HCT116 (cell line): ENCODE measurements at regions of chr6 and their contacts with region 1.

Region 1: GRCh38 chr6:49531774-49532569 is 18.5 kb upstream of the C6orf141 start:
- DNase-seq: peak; percentile 82
- ATAC-seq: peak; percentile 97
- H3K4me3 ChIP-seq: peak overlapping the region; percentile 22 to 40
- H3K27ac ChIP-seq: no peak overlapping the region
- H3K4me1 ChIP-seq: peaks cover 0 to 6% of the 10 kb centered on the region in 2 experiments; a peak in 2 of 4 replicates
- H3K27me3 ChIP-seq: no peaks in the 10 kb centered on the region
- CTCF ChIP-seq: peak; percentile 68 to 100 (median 98)
- POLR2A ChIP-seq: no peak
- RAD21 ChIP-seq: peak; percentile 89

Region 2: DNA sequence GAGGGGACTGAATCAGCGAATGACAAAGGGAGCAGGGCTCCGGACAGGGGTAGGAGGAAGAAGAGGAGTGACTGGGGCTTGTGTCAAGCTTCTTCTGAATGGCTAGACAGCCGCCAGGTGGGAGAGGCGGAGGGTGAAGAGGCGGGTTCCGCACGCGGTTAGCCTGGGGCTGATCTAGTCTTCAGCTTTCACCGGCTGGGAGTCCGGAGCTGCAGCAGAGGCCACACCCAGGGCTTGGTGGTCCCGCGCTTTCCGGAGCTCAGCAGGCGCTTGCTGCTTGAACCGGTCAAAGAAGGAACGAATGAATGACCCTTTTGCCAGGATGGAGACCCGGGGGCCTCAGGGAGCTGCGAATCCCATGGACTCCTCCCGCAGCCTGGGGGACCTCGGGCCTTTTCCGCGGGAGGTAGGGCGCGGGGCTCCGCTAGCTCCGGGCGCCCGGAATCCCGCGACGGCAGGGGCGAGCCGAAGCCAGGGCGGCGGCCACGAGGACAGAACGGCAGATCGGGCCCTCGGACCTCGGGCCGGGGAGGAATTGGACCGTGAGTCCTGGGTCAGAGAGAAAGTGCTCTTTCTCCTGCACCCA is 18.6 kb after region 1 on chr6 and contains the start of gene C6orf141:
- CTCF ChIA-PET with region 1: interaction called, 21 read pairs
- POLR2A ChIA-PET with region 1: interaction called, 6 read pairs
- RAD21 ChIA-PET with region 1: no interaction called
- intact Hi-C with region 1: no loop called
- DNase-seq: peak; percentile 70
- ATAC-seq: peak; percentile 88
- H3K4me3 ChIP-seq: peak within 1 kb of the TSS; percentile 75
- H3K27ac ChIP-seq: peak within 1 kb of the TSS; percentile 81
- H3K4me1 ChIP-seq: peaks cover 43 to 64% of the 10 kb centered on the region in 2 experiments
- H3K27me3 ChIP-seq: no peaks in the 10 kb centered on the region
- CTCF ChIP-seq: no peak
- POLR2A ChIP-seq: no peak
- RAD21 ChIP-seq: no peak
- total RNA-seq, gene C6orf141: 31.6 TPM

Region 3: DNA sequence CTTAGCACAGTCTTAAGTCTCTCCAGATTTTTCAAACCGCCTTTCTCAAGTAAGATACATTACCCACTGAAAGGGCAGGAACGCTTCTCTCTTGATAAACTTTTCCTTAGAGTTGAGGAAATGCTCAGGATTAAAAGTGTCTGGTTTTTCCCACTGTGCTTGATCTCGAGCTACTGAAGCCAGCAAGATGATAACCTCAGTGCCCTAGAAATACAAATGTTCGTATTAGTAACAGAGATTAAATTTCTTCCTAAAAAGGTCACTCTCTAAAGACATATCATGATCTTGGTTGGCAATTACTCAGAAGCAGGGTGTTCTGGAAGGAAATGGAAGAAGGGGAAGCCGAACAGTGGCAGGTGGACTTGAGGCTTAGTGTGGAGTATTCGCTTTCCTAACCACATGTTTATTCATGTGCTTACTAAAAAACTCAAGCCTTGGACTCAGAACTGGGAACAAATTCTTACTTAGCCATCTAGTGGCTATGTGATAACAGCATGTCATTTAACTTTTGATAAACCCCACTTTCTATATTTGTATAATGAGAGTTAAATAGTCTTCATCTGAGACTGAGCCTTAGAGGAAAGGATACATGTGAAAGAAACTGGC is 38.6 kb after region 1 on chr6:
- CTCF ChIA-PET with region 1: interaction called, 15 read pairs
- POLR2A ChIA-PET with region 1: no interaction called
- RAD21 ChIA-PET with region 1: no interaction called
- intact Hi-C with region 1: no loop called
- DNase-seq: no peak
- ATAC-seq: peak; percentile 73
- H3K4me3 ChIP-seq: no peak overlapping the region
- H3K27ac ChIP-seq: no peak overlapping the region
- H3K4me1 ChIP-seq: peaks cover 12 to 20% of the 10 kb centered on the region in 2 experiments
- H3K27me3 ChIP-seq: no peaks in the 10 kb centered on the region
- CTCF ChIP-seq: peak; percentile 25 to 58 (median 42); a peak in 4 of 6 replicates
- POLR2A ChIP-seq: no peak
- RAD21 ChIP-seq: peak; percentile 40

Region 4: DNA sequence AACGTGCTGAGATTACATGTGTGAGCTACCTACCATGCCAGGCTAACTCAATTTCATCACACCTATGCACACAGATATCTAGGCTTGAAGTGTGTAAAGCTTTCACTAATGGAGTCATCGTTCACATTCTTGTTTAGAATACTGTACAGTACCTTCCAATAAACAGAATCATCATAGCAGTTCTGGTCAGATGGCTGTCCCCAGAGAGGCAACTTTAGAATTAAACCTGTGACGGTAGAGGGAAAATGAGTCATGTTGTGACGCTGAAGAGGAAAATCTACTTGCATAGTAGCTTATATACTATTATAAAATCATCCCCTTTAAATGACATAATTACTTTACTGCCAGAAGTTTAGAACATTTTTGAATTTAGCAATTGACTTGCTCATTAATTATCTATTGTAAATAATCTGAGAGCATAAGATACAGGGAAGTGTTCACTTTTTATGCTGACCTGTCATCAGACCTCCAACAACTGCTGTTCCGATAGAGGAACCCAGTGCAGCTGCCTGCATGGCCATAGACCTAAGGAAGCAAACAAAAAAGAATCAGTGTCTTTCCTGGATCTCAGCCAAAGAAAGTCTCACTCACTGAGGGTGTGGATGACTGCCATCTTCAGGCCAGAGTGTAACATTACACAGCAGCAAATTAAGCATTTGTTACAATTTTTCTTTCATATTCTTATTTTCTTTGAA is 74.9 kb after region 1 on chr6:
- CTCF ChIA-PET with region 1: interaction called, 59 read pairs
- POLR2A ChIA-PET with region 1: interaction called, 4 read pairs
- RAD21 ChIA-PET with region 1: no interaction called
- intact Hi-C with region 1: loop called (anchors 1 kb)
- DNase-seq: peak; percentile 93
- ATAC-seq: peak; percentile 95
- H3K4me3 ChIP-seq: peak overlapping the region in 1 of 2 experiments; percentile 43; a peak in 2 of 4 replicates
- H3K27ac ChIP-seq: no peak overlapping the region
- H3K4me1 ChIP-seq: peaks cover 0 to 12% of the 10 kb centered on the region in 2 experiments; a peak in 3 of 4 replicates
- H3K27me3 ChIP-seq: no peaks in the 10 kb centered on the region
- CTCF ChIP-seq: peak; percentile 79 to 97 (median 86)
- POLR2A ChIP-seq: no peak
- RAD21 ChIP-seq: peak; percentile 92

Region 5: DNA sequence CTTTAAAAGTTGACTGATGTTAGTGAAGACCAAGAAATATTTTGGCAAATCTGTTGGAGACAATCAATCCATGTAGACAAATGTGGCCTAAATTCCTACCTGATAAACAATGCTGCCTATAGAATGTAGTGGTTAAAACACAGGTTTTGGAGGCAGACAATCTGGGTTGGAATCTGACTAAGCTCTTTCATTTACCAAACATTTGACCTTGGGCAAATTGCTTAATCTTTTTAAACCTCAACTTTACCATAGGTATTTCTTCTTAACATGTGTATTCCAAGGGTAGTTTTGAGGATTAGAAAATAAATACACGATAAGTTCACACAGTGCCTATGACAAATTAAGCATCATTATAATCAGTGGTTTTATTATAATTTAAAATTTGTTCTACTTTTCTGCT is 93.2 kb after region 1 on chr6:
- CTCF ChIA-PET with region 1: interaction called, 9 read pairs
- POLR2A ChIA-PET with region 1: no interaction called
- RAD21 ChIA-PET with region 1: interaction called, 3 to 8 read pairs
- intact Hi-C with region 1: loop called (anchors 5 kb)
- DNase-seq: no peak
- ATAC-seq: no peak
- H3K4me3 ChIP-seq: no peak overlapping the region
- H3K27ac ChIP-seq: no peak overlapping the region
- H3K4me1 ChIP-seq: peaks cover 6 to 8% of the 10 kb centered on the region in 2 experiments; a peak in 2 of 4 replicates
- H3K27me3 ChIP-seq: no peaks in the 10 kb centered on the region
- CTCF ChIP-seq: no peak
- POLR2A ChIP-seq: no peak
- RAD21 ChIP-seq: no peak

Region 6: DNA sequence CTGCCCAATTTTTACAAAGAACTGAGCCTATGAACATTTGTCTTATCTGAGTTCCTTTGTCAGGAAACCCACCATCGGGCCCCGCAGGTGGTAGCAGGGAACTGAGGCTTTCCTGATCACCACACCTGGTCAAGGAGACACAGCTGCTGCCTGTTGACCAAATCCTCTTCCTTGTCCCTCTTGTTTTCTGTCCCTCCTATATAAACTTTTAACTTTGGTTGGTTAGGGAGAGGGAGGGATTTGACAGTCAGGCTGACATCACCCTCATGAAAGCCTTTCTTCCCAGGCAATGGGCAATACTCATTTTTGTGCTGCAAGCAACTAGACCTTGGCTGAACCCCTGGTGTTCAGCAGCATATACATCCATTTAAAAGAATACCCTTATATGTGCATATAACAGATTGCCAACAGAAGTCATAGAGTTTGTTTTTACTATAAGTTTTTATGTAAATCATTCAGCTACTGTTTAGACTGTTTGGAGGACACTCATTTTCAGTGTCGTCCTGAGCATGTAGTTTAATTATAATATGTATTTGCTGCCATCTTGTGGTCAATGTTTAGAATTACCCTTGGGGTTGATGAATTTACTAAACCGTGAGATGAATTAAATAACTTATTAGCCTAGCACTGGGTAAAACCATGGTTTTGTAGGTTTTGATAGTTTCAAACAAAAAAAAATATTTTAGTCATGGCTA is 317.4 kb after region 1 on chr6:
- CTCF ChIA-PET with region 1: interaction called, 15 read pairs
- POLR2A ChIA-PET with region 1: no interaction called
- RAD21 ChIA-PET with region 1: interaction called, 3 to 4 read pairs
- intact Hi-C with region 1: loop called (anchors 1 kb)
- DNase-seq: peak; percentile 56
- ATAC-seq: peak; percentile 88
- H3K4me3 ChIP-seq: no peak overlapping the region
- H3K27ac ChIP-seq: no peak overlapping the region
- H3K4me1 ChIP-seq: no peaks in the 10 kb centered on the region
- H3K27me3 ChIP-seq: no peaks in the 10 kb centered on the region
- CTCF ChIP-seq: peak; percentile 33 to 73 (median 65); a peak in 4 of 6 replicates
- POLR2A ChIP-seq: no peak
- RAD21 ChIP-seq: peak; percentile 82

Region 7: DNA sequence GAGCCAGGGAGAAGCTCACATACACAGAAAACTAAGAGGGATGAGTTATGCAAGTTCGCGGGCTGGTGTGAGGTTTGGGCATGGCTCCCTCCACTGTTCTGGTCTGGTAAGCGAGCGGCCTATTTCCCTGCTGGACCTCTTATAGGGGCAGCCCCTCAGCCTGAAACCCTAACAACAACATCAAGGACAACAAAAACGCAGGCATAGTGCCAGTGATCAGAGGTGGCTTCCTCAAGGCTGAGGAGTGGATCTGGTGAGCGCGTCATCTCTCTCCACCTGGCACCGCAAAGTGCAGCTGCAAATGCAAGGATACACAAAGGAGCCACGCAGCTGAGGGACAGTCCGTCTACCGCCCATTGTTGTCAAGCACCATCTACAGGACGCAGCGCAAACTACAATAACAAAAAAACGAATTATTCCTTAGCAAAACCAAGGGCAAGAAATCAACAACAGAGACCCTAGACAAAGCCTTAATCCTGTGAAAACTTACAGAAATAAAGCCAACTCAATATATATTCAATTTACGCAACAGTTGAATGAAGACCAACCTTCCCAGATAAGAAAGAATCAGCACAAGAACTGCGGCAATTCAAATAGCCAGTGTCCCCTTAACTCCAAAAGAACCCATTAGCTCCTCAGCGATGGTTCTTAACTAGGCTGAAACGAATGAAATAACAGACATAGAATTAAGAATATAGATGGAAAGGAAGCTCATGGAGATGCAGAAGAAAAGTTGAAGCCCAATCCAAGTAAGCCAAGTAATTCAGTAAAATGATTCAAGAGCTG is 499.0 kb after region 1 on chr6:
- CTCF ChIA-PET with region 1: interaction called, 4 read pairs
- POLR2A ChIA-PET with region 1: no interaction called
- RAD21 ChIA-PET with region 1: no interaction called
- intact Hi-C with region 1: loop called (anchors 1 kb)
- DNase-seq: peak; percentile 46
- ATAC-seq: peak; percentile 98
- H3K4me3 ChIP-seq: no peak overlapping the region
- H3K27ac ChIP-seq: no peak overlapping the region
- H3K4me1 ChIP-seq: peaks cover 0 to 5% of the 10 kb centered on the region in 2 experiments; a peak in 1 of 4 replicates
- H3K27me3 ChIP-seq: no peaks in the 10 kb centered on the region
- CTCF ChIP-seq: peak; percentile 55 to 74 (median 68); a peak in 5 of 6 replicates
- POLR2A ChIP-seq: no peak
- RAD21 ChIP-seq: peak; percentile 55